Activated naive CD4-positive, alpha-beta T cell treated with anti-CD3 and anti-CD28 coated beads, Interleukin-2, amount 10 ng/mL, durations not matched to agents 7 days and 5 days (primary cell): ENCODE measurements at regions of chrX and their contacts with region 1.

Region 1: GRCh38 chrX:153507484-153508178 is 9.8 kb upstream of the ATP2B3 start:
- DNase-seq: peak; percentile 85
- H3K4me3 Mint-ChIP-seq: no peak overlapping the region
- H3K27ac Mint-ChIP-seq: no peak overlapping the region
- H3K4me1 Mint-ChIP-seq: no peaks in the 10 kb centered on the region
- H3K27me3 Mint-ChIP-seq: no peaks in the 10 kb centered on the region

Region 2: DNA sequence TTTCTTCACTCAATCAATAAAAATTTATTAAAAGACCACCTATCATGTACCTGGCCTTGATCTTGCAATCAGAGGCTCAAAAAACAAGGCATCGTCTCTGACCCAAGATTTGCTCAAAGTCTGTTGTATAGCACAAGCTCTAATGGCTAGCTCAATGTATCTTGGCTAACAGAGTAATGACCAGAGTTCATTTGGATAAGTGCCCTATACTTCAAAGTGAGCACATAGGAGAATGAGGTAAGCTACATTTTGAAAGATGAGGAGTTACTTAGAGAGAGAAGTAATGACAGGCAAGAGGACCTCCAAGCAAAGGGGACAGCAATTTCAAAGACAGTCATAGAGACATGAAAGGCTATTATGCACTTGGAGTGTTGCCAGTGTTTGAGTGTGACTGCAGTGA is 892.8 kb before region 1 on chrX:
- CTCF ChIA-PET with region 1: no interaction called
- DNase-seq: no peak
- H3K4me3 Mint-ChIP-seq: no peak overlapping the region
- H3K27ac Mint-ChIP-seq: no peak overlapping the region
- H3K4me1 Mint-ChIP-seq: no peaks in the 10 kb centered on the region
- H3K27me3 Mint-ChIP-seq: no peaks in the 10 kb centered on the region

Region 3: GRCh38 chrX:152958524-152959465 is 548.8 kb before region 1 on chrX:
- CTCF ChIA-PET with region 1: interaction called, 14 read pairs
- DNase-seq: peak; percentile 90
- H3K4me3 Mint-ChIP-seq: peak overlapping the region; percentile 27
- H3K27ac Mint-ChIP-seq: peak overlapping the region; percentile 95
- H3K4me1 Mint-ChIP-seq: peaks cover 16% of the 10 kb centered on the region
- H3K27me3 Mint-ChIP-seq: no peaks in the 10 kb centered on the region

Region 4: GRCh38 chrX:153032397-153033118 is 475.1 kb before region 1 on chrX:
- CTCF ChIA-PET with region 1: interaction called, 11 read pairs
- DNase-seq: peak; percentile 71
- H3K4me3 Mint-ChIP-seq: peak overlapping the region; percentile 78
- H3K27ac Mint-ChIP-seq: peak overlapping the region; percentile 94
- H3K4me1 Mint-ChIP-seq: peaks cover 25% of the 10 kb centered on the region
- H3K27me3 Mint-ChIP-seq: no peaks in the 10 kb centered on the region

Region 5: GRCh38 chrX:153470435-153471363 is 36.9 kb before region 1 on chrX and contains the start of gene HAUS7:
- CTCF ChIA-PET with region 1: interaction called, 39 read pairs
- DNase-seq: peak; percentile 90
- H3K4me3 Mint-ChIP-seq: peak within 1 kb of the TSS; percentile 79
- H3K27ac Mint-ChIP-seq: peak within 1 kb of the TSS; percentile 87
- H3K4me1 Mint-ChIP-seq: peaks cover 28% of the 10 kb centered on the region
- H3K27me3 Mint-ChIP-seq: peaks cover 16% of the 10 kb centered on the region

Region 6: DNA sequence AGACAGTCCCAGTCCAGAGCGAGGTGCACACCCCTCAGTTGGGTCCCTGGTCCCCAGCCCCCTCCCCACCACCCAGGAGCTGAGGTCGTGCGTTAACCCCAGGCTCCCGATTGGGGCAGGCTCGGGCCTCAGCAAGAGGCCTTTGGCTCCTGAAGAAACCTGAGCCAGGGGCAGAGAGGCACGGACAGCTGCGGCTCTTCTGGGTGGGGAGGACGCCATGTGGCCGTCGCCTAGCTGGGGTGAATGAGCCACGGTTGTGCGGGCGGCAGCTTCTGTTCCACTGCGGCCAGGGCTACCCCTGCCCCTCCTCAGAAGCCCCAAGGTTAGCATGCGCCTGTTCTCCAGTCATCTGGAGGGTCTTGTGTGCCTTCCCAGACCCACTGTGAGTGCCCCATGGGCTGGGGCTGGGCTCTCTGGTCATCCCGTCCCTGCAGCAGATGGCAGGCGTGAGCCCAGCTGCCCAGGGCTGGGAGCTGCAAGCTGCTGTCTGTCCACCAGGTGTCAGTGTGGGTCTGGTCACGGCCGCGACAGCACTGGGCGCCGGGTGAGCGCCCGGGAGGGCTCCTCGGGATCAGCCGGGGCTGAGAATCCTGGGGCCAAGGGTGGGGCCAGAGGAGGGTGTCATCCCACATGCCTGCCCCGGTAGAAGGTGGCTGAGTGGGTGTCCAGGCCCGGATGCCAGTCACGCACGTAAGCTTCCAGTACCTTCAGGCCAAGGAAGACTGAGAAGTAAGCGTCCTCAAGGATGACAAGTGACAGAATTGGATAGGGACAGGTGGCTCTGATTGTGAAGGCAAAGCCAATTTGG is 31.7 kb after region 1 on chrX:
- CTCF ChIA-PET with region 1: no interaction called
- DNase-seq: peak; percentile 68
- H3K4me3 Mint-ChIP-seq: no peak overlapping the region
- H3K27ac Mint-ChIP-seq: no peak overlapping the region
- H3K4me1 Mint-ChIP-seq: no peaks in the 10 kb centered on the region
- H3K27me3 Mint-ChIP-seq: peaks cover 10% of the 10 kb centered on the region